ENCODE measurements at regions of chr10 and their contacts with region 1.

Region 1: GRCh38 chr10:4767033-4767814 is 58.8 kb upstream of the AKR1E2 start:
- DNase-seq: peak; percentile 80
- H3K4me3 ChIP-seq: no peak overlapping the region
- H3K27ac ChIP-seq: peak overlapping the region; percentile 71
- H3K4me1 ChIP-seq: peaks cover 61% of the 10 kb centered on the region
- H3K27me3 ChIP-seq: no peaks in the 10 kb centered on the region
- CTCF ChIP-seq: peak; percentile 81

Region 2: GRCh38 chr10:3239066-3239919 is 1527.9 kb before region 1 on chr10:
- CTCF ChIA-PET with region 1: no interaction called
- POLR2A ChIA-PET with region 1: no interaction called
- intact Hi-C with region 1: loop called (anchors 5 kb)
- DNase-seq: peak; percentile 66
- H3K4me3 ChIP-seq: no peak overlapping the region
- H3K27ac ChIP-seq: no peak overlapping the region
- H3K4me1 ChIP-seq: peaks cover 6% of the 10 kb centered on the region
- H3K27me3 ChIP-seq: no peaks in the 10 kb centered on the region
- CTCF ChIP-seq: peak; percentile 91

Region 3: GRCh38 chr10:4351723-4352413 is 415.4 kb before region 1 on chr10:
- CTCF ChIA-PET with region 1: no interaction called
- POLR2A ChIA-PET with region 1: no interaction called
- intact Hi-C with region 1: no loop called
- DNase-seq: no peak
- H3K4me3 ChIP-seq: no peak overlapping the region
- H3K27ac ChIP-seq: no peak overlapping the region
- H3K4me1 ChIP-seq: no peaks in the 10 kb centered on the region
- H3K27me3 ChIP-seq: peaks cover 27% of the 10 kb centered on the region
- CTCF ChIP-seq: no peak

Region 4: GRCh38 chr10:4391683-4392082 is 375.5 kb before region 1 on chr10:
- CTCF ChIA-PET with region 1: no interaction called
- POLR2A ChIA-PET with region 1: no interaction called
- intact Hi-C with region 1: loop called (anchors 10 kb)
- DNase-seq: peak; percentile 79
- H3K4me3 ChIP-seq: no peak overlapping the region
- H3K27ac ChIP-seq: no peak overlapping the region
- H3K4me1 ChIP-seq: peaks cover 8% of the 10 kb centered on the region
- H3K27me3 ChIP-seq: peaks cover 11% of the 10 kb centered on the region
- CTCF ChIP-seq: peak; percentile 47

Region 5: GRCh38 chr10:4663162-4663904 is 103.9 kb before region 1 on chr10:
- CTCF ChIA-PET with region 1: no interaction called
- POLR2A ChIA-PET with region 1: no interaction called
- intact Hi-C with region 1: loop called (anchors 5 kb)
- DNase-seq: peak; percentile 95
- H3K4me3 ChIP-seq: no peak overlapping the region
- H3K27ac ChIP-seq: peak overlapping the region; percentile 66
- H3K4me1 ChIP-seq: peaks cover 16% of the 10 kb centered on the region
- H3K27me3 ChIP-seq: no peaks in the 10 kb centered on the region
- CTCF ChIP-seq: no peak

Region 6: GRCh38 chr10:4704034-4704545 is 63.1 kb before region 1 on chr10:
- CTCF ChIA-PET with region 1: no interaction called
- POLR2A ChIA-PET with region 1: no interaction called
- intact Hi-C with region 1: loop called (anchors 5 kb)
- DNase-seq: peak; percentile 28
- H3K4me3 ChIP-seq: no peak overlapping the region
- H3K27ac ChIP-seq: no peak overlapping the region
- H3K4me1 ChIP-seq: no peaks in the 10 kb centered on the region
- H3K27me3 ChIP-seq: no peaks in the 10 kb centered on the region
- CTCF ChIP-seq: no peak

Region 7: DNA sequence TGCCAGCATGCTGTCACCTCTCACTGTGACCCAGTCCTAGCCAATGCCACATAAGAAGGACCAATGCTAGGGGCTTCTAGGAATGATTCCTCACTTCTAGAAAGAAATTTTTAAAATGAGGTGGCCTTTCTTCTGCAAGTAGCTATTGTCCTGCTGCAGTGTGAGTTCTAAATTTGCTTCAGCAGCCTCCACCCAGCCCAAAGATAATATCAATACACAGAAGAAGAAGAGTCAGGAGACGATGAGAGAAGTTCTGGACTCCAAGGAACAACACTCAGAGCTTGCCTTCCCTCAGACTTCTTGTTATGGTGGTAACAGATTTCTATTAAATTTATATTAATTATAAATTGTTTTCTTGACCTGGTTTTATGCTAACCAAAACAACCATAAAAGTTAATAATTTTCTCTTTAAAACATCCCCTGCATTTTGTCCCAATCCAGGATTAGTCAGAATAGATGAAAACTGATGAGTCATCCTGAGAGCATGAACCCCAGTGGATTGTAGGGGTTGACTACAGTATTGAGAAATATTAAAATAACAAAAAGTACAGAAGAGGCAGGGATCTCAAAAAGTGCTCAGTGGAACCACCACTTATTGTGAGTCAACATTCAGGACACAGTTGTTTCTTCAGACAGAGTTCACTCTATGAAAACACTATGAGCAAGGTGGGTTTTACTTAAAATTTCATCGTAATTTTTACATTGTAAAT is 266.0 kb after region 1 on chr10:
- CTCF ChIA-PET with region 1: no interaction called
- POLR2A ChIA-PET with region 1: no interaction called
- intact Hi-C with region 1: no loop called
- DNase-seq: no peak
- H3K4me3 ChIP-seq: no peak overlapping the region
- H3K27ac ChIP-seq: no peak overlapping the region
- H3K4me1 ChIP-seq: peaks cover 29% of the 10 kb centered on the region
- H3K27me3 ChIP-seq: no peaks in the 10 kb centered on the region
- CTCF ChIP-seq: no peak

Measured in A673 (cell line).